ENCODE measurements at regions of chr5 and their contacts with region 1.

Region 1: DNA sequence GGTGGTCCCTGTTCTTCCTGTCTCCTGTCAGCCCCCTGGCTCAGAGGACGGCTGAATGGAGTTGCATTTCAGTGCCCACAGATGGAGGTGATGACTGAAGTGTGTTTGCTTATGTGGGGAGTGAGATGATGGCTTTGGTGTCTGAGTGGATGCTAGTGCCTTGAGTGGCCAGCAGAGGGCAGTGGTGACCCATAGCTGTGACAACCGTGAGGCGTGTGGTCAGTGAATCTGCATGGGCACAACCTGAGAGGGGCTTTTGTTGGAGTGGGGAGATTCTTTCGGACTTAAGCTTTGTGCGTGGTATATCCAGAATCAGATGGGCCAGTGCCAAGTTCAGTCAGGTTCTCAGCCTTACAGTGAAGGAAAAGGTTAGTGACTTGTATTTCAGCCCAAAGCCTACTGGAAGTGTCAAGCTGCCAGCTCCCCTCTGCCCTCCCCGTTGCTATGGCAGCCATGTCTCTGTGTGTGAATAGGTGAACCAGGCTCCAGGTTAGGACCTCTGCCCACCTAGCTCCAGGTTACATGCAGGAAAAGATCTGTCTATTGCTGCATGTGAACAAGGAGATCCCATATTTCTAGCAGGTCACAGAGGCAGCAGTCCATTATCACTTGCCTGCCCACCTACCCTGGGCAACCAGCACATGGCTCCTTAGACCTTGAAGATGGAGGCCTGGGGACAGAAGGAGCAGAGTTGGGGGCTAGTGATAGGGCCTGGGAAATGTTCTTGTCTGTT is 14.7 kb upstream of the CXXC5 start:
- DNase-seq: peak; percentile 83
- H3K4me3 Mint-ChIP-seq: no peak overlapping the region
- H3K27ac Mint-ChIP-seq: no peak overlapping the region
- H3K4me1 Mint-ChIP-seq: peaks cover 34% of the 10 kb centered on the region
- H3K27me3 Mint-ChIP-seq: no peaks in the 10 kb centered on the region
- CTCF ChIP-seq: peak; percentile 99

Region 2: DNA sequence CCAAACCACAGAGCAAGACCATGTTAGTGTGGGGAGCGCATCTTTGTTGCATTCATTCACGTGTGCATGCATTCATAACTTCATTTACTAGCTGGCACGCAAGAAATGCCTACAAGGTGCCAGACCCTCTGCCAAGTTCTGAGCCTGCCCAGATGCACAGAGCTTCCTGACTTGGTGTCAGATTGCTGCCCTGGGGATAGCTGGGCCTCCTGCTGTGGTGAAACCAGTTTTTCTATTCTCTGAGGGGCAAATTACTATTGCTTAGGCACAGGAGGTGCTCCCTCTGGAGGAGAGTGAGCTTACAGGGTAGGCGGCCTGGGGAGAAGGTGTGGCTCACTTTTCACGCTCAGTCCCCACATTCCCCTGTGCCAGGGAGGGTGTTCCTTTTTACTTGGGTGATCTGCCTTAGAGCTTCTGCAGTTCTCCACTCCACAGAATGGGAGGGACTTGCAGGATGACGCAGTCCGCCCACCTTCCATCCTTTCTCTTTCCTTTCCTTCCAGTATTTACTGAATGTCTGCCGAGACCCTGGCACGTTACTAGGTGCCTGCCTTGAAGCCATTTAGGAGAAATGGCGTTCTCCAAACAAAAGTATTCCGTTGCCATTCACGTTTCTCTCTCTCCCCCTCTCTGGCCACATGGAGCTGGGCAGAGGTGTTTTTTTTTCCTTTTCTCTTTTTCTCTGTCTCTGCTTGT is 908.2 kb before region 1 on chr5:
- CTCF ChIA-PET with region 1: no interaction called
- POLR2A ChIA-PET with region 1: no interaction called
- intact Hi-C with region 1: no loop called
- DNase-seq: peak; percentile 100
- H3K4me3 Mint-ChIP-seq: peak overlapping the region; percentile 51
- H3K27ac Mint-ChIP-seq: peak overlapping the region; percentile 96
- H3K4me1 Mint-ChIP-seq: peaks cover 39% of the 10 kb centered on the region
- H3K27me3 Mint-ChIP-seq: no peaks in the 10 kb centered on the region
- CTCF ChIP-seq: peak; percentile 55

Region 3: DNA sequence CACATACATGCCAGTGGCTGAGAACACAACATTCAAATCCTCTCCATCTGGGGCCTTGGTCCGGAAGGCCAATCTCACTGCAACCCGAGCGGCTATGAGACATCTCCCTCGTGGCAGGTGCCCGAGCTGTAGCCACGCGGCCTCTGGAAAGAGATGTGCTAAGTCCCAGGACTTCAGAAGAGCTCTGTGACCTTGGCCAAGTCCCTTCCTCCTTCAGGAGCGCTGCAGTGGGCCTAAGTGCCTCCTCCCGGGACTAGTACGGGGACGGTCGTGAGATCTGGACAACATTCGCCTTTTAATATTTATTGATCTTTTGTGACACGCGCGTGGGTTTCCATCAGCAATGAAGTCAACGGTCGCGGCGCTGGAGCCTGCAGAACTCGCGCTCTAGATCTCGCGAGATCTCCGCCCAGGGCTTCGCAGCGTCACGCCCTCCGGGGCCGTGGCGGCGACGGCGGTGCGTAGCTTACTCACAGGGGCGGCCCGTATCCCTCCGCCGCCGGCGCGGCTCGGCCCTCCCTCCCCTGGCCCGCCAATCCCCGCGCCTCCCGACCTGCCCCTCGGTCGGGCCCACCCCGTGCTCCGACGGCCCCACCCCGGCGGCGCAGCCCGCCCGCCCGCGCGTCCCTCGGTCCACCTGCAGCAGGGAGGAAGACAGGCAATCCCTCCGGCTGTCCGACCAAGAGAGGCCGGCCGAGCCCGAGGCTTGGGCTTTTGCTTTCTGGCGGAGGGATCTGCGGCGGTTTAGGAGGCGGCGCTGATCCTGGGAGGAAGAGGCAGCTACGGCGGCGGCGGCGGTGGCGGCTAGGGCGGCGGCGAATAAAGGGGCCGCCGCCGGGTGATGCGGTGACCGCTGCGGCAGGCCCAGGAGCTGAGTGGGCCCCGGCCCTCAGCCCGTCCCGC is 72.5 kb before region 1 on chr5 and contains the start of gene UBE2D2:
- CTCF ChIA-PET with region 1: interaction called, 3 read pairs
- POLR2A ChIA-PET with region 1: interaction called, 10 read pairs
- intact Hi-C with region 1: no loop called
- DNase-seq: peak; percentile 98
- H3K4me3 Mint-ChIP-seq: peak within 1 kb of the TSS; percentile 85
- H3K27ac Mint-ChIP-seq: peak within 1 kb of the TSS; percentile 88
- H3K4me1 Mint-ChIP-seq: peaks cover 12% of the 10 kb centered on the region
- H3K27me3 Mint-ChIP-seq: no peaks in the 10 kb centered on the region
- CTCF ChIP-seq: no peak
- total RNA-seq, gene UBE2D2: 306 and 329 TPM in 2 replicates

Region 4: DNA sequence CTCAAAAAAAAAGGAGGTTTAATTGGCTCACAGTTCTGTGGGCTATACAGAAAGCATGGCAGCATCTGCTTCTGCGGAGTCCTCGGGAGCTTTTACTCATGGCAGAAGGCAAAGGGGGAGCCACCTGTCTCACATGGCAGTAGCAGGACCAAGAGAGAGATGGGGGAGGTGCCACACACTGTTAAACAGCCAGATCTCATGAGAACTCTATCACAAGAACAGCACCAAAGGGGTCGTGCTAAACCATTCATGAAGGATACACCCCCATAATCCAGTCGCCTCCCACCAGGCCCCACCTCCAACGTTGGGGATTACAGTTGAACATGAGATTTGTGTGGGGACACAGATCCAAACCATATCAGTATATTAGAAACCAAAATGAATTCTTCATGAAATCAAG is 13.6 kb before region 1 on chr5:
- CTCF ChIA-PET with region 1: interaction called, 38 read pairs
- POLR2A ChIA-PET with region 1: interaction called, 11 read pairs
- intact Hi-C with region 1: no loop called
- DNase-seq: no peak
- H3K4me3 Mint-ChIP-seq: no peak overlapping the region
- H3K27ac Mint-ChIP-seq: no peak overlapping the region
- H3K4me1 Mint-ChIP-seq: no peaks in the 10 kb centered on the region
- H3K27me3 Mint-ChIP-seq: no peaks in the 10 kb centered on the region
- CTCF ChIP-seq: no peak

Region 5: GRCh38 chr5:139670369-139671095 is 37.1 kb after region 1 on chr5:
- CTCF ChIA-PET with region 1: interaction called, 67 read pairs
- POLR2A ChIA-PET with region 1: interaction called, 5 read pairs
- intact Hi-C with region 1: no loop called
- DNase-seq: no peak
- H3K4me3 Mint-ChIP-seq: no peak overlapping the region
- H3K27ac Mint-ChIP-seq: peak overlapping the region; percentile 93
- H3K4me1 Mint-ChIP-seq: peaks cover 25% of the 10 kb centered on the region
- H3K27me3 Mint-ChIP-seq: no peaks in the 10 kb centered on the region
- CTCF ChIP-seq: peak; percentile 20

Region 6: DNA sequence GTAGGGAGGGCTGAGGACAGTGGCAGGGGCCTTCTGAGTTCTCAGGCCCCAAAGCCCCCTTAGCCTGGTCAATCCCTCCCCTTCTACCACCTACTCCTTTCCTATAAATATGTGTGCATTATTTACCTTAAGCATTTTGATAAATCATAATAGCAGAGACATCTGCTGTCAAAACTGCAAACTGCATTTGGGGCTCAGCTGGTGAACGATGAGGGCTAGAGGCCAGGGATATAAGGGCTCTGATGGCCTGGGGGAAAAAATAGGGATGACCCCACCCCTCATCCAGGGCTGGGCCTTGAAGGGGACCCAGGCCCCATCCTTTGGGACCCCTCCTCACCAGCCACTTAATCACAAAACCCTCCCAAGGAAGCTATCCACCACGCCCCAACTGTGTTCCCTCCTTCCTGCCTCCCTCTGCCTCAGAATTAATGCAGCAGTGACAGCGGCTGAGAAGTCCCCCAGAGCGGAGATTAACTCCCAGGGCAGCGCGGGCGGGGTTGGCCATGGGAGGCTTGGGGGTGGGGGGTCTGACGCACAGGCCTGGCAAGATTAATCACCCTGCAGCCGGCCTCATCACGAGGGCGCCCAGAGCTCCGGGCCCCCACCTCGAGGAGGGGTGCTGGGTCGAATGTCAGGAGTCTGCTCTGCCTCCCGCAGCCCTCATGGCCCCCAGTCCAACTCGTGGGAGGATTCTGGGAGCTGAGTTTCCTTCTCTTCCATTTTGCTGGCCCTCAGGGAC is 56.8 kb after region 1 on chr5:
- CTCF ChIA-PET with region 1: interaction called, 321 read pairs
- POLR2A ChIA-PET with region 1: interaction called, 15 read pairs
- intact Hi-C with region 1: loop called (anchors 1 kb)
- DNase-seq: peak; percentile 66
- H3K4me3 Mint-ChIP-seq: no peak overlapping the region
- H3K27ac Mint-ChIP-seq: no peak overlapping the region
- H3K4me1 Mint-ChIP-seq: peaks cover 6% of the 10 kb centered on the region
- H3K27me3 Mint-ChIP-seq: no peaks in the 10 kb centered on the region
- CTCF ChIP-seq: peak; percentile 84

Region 7: DNA sequence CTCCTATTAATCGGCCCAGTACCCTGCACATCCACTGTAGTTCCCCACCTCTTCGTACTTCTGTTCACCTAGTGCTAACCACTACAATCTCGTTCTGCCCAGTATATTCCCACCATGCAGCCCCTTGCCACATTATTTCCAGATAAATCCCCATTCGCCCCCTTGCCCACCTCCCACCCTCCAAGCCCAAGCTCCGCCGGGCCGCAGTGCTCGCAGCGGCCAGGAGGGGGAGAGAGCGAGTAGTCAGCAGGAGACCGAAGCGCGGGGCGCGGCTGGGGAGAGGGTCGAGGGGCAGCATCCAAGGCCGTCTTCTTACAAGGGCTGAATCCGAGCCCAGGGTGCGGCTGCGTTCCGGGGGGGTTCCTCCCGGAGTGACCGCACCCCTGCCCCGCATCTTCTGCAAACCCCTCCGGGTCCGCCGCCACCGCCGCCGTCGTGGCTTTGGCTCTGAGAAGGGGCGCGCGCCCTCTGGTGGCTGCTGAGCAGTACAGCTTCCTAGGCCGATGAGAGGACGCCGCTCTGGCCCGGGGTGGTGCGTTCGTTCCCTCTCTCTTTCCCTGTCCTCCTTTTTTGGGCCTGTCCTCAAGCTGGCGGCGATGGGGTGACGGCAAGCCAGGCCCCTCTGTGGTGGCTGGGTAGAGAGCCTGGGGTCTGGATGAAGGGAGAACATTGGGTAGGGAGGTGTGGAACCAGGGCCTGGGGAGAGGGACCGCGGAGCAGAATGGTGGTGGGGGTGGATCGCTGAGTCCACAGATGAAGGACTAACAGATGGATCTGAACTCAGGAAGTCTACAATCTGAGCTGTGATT is 132.2 kb after region 1 on chr5:
- CTCF ChIA-PET with region 1: interaction called, 238 read pairs
- POLR2A ChIA-PET with region 1: interaction called, 12 read pairs
- intact Hi-C with region 1: loop called (anchors 1 kb)
- DNase-seq: peak; percentile 85
- H3K4me3 Mint-ChIP-seq: peak overlapping the region; percentile 54
- H3K27ac Mint-ChIP-seq: no peak overlapping the region
- H3K4me1 Mint-ChIP-seq: peaks cover 13% of the 10 kb centered on the region
- H3K27me3 Mint-ChIP-seq: no peaks in the 10 kb centered on the region
- CTCF ChIP-seq: peak; percentile 98